Posterior cingulate gyrus (tissue), 11 donors: ENCODE measurements at regions of chr1 and their contacts with region 1.

Region 1: GRCh38 chr1:193019442-193020026 is 39.6 kb downstream of the UCHL5 start:
- DNase-seq: no peak

Region 2: DNA sequence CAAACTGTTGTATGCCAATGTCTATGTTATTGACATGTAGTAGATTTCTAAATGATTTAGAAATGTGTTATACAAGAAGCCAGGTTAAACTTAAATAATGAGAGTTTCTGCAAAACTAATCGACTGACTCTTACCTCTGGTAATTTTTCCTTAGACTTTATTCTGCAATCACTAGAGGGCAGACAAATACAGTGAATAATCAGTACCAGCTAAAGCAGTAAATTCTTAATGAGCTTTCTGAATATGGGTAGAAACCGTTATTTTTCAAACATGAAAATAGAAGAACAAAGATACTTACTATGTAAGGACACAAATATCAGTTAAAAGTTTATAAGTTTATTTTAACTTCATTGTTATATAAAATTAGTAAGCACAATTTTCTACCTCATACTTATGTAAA is 541.9 kb before region 1 on chr1:
- intact Hi-C with region 1: loop called (anchors 2 kb)
- DNase-seq: no peak

Region 3: GRCh38 chr1:192609110-192610079 is 410.1 kb before region 1 on chr1:
- intact Hi-C with region 1: loop called (anchors 10 kb)
- DNase-seq: peak in 9 of 10 donors; percentile 4 to 86 (median 33)

Region 4: DNA sequence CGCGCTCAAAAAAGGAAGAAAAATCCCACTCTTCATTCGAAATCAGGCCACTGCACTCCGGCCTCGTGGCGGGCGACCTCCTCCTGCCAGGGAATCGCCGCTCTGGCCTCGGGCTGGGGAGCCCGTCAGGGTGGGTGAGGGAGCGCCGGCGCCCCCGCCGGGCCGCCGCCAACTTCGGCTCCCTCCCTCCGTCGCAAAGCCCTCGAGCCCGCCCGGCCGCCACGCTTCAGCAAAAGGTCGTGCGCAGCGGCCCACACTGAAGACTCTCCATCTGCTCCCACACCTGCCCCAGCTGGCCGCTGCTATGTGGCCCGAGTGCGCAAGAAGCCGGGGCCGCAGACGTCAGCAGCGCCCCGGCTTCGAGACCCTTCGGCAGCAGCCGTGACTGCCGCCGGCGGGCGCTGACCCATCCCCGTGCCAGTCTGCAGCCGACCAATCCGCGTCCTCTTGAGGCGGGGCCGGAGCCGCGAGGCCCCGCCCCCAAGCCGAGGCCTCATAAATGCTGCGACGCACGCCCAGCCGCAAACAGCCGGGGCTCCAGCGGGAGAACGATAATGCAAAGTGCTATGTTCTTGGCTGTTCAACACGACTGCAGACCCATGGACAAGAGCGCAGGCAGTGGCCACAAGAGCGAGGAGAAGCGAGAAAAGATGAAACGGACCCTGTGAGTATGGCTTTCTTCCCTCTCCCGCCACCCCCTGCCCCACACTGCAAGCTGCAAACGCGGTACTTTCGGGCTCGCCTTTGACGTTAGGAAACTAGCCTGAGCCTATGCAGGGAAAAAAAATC is 210.8 kb before region 1 on chr1 and contains the start of gene RGS2:
- intact Hi-C with region 1: loop called (anchors 5 kb)
- DNase-seq: peak; percentile 89 to 99 (median 95)

Region 5: GRCh38 chr1:193094112-193094511 is 74.6 kb after region 1 on chr1:
- intact Hi-C with region 1: no loop called
- DNase-seq: no peak